BJ (cell line): ENCODE measurements at regions of chr6 and their contacts with region 1.

Region 1: GRCh38 chr6:165884813-165885765 is 222.0 kb upstream of the PDE10A start:
- DNase-seq: no peak
- H3K4me3 ChIP-seq: no peak overlapping the region
- H3K27me3 ChIP-seq: no peaks in the 10 kb centered on the region
- CTCF ChIP-seq: peak; percentile 82

Region 2: GRCh38 chr6:165468836-165469235 is 416.3 kb before region 1 on chr6:
- CTCF ChIA-PET with region 1: no interaction called
- POLR2A ChIA-PET with region 1: no interaction called
- DNase-seq: no peak
- H3K4me3 ChIP-seq: no peak overlapping the region
- H3K27me3 ChIP-seq: no peaks in the 10 kb centered on the region
- CTCF ChIP-seq: no peak

Region 3: GRCh38 chr6:165536911-165537310 is 348.2 kb before region 1 on chr6:
- CTCF ChIA-PET with region 1: no interaction called
- POLR2A ChIA-PET with region 1: no interaction called
- DNase-seq: no peak
- H3K4me3 ChIP-seq: no peak overlapping the region
- H3K27me3 ChIP-seq: no peaks in the 10 kb centered on the region
- CTCF ChIP-seq: no peak

Region 4: DNA sequence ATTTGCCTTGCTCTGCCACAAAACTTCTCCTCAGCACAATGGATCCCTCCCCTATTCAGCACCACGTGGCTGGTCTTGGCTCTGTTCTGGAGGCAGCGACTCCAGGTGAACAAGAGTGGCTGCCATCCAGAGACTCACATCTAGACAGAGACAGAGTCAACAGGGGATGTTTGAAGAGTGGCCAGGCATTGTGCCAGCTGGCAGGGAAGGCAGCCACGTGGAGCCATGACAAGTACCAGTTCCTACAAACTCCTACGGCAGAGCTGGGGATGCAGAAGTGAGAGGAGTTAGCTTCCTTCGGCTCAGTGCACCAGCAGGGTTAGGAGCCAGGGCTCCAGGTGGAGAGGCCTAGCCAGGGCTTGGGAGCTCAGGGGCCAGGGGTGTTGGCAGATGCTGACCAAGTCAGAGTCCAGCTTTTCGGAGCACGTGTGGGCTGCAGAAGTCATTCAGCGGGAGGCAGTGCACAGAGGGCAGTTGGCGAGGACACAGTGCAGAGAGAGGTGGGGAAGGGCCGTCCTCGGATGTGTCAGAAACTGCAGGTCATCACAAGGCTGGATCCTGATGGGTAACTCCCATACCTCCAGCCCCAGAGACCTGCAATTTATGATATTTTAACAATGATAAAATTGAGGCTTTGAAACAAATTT is 50.4 kb before region 1 on chr6:
- CTCF ChIA-PET with region 1: no interaction called
- POLR2A ChIA-PET with region 1: no interaction called
- DNase-seq: no peak
- H3K4me3 ChIP-seq: no peak overlapping the region
- H3K27me3 ChIP-seq: no peaks in the 10 kb centered on the region
- CTCF ChIP-seq: no peak

Region 5: GRCh38 chr6:166097915-166098522 is 212.9 kb after region 1 on chr6:
- CTCF ChIA-PET with region 1: interaction called, 88 read pairs
- POLR2A ChIA-PET with region 1: no interaction called
- DNase-seq: no peak
- H3K4me3 ChIP-seq: no peak overlapping the region
- H3K27me3 ChIP-seq: no peaks in the 10 kb centered on the region
- CTCF ChIP-seq: peak; percentile 94

Region 6: GRCh38 chr6:166106076-166106686 is 221.1 kb after region 1 on chr6:
- CTCF ChIA-PET with region 1: interaction called, 59 read pairs
- POLR2A ChIA-PET with region 1: no interaction called
- DNase-seq: no peak
- H3K4me3 ChIP-seq: no peak overlapping the region
- H3K27me3 ChIP-seq: no peaks in the 10 kb centered on the region
- CTCF ChIP-seq: peak; percentile 70